Natural killer cell (primary cell): ENCODE measurements at regions of chr22 and their contacts with region 1.

Region 1: GRCh38 chr22:30356449-30357235 is at the starts of genes CCDC157 and SF3A1:
- DNase-seq: peak; percentile 89 to 95
- ATAC-seq: peak; percentile 84 to 94 (median 84)
- H3K4me3 ChIP-seq: peak within 1 kb of the TSS; percentile 96
- H3K4me3 Mint-ChIP-seq: peak within 1 kb of the TSS; percentile 97
- H3K27ac ChIP-seq: peak within 1 kb of the TSS; percentile 88
- H3K27ac Mint-ChIP-seq: peak within 1 kb of the TSS; percentile 89 to 92
- H3K4me1 ChIP-seq: peaks cover 50% of the 10 kb centered on the region
- H3K4me1 Mint-ChIP-seq: peaks cover 59% of the 10 kb centered on the region in 2 donors
- H3K27me3 ChIP-seq: no peaks in the 10 kb centered on the region
- H3K27me3 Mint-ChIP-seq: peaks cover 0 to 3% of the 10 kb centered on the region in 2 donors
- CTCF ChIP-seq: no peak
- total RNA-seq, gene CCDC157: 7.7 to 9.7 (median 8.4) TPM
- total RNA-seq, gene SF3A1: 309 to 340 (median 319) TPM

Region 2: GRCh38 chr22:30077279-30077880 is 279.3 kb before region 1 on chr22:
- intact Hi-C with region 1: no loop called
- DNase-seq: no peak
- ATAC-seq: no peak
- H3K4me3 ChIP-seq: no peak overlapping the region
- H3K4me3 Mint-ChIP-seq: no peak overlapping the region
- H3K27ac ChIP-seq: no peak overlapping the region
- H3K27ac Mint-ChIP-seq: no peak overlapping the region
- H3K4me1 ChIP-seq: peaks cover 6% of the 10 kb centered on the region
- H3K4me1 Mint-ChIP-seq: peaks cover 0 to 8% of the 10 kb centered on the region in 2 donors
- H3K27me3 ChIP-seq: no peaks in the 10 kb centered on the region
- H3K27me3 Mint-ChIP-seq: peaks cover 29 to 49% of the 10 kb centered on the region in 2 donors
- CTCF ChIP-seq: no peak

Region 3: GRCh38 chr22:30262917-30263741 is 93.5 kb before region 1 on chr22:
- intact Hi-C with region 1: loop called (anchors 1 kb)
- DNase-seq: peak; percentile 76 to 88
- ATAC-seq: no peak
- H3K4me3 ChIP-seq: no peak overlapping the region
- H3K4me3 Mint-ChIP-seq: peak overlapping the region; percentile 28
- H3K27ac ChIP-seq: no peak overlapping the region
- H3K27ac Mint-ChIP-seq: peak overlapping the region; percentile 34 to 84
- H3K4me1 ChIP-seq: peaks cover 61% of the 10 kb centered on the region
- H3K4me1 Mint-ChIP-seq: peaks cover 29 to 52% of the 10 kb centered on the region in 2 donors
- H3K27me3 ChIP-seq: no peaks in the 10 kb centered on the region
- H3K27me3 Mint-ChIP-seq: no peaks in the 10 kb centered on the region
- CTCF ChIP-seq: peak; percentile 100

Region 4: DNA sequence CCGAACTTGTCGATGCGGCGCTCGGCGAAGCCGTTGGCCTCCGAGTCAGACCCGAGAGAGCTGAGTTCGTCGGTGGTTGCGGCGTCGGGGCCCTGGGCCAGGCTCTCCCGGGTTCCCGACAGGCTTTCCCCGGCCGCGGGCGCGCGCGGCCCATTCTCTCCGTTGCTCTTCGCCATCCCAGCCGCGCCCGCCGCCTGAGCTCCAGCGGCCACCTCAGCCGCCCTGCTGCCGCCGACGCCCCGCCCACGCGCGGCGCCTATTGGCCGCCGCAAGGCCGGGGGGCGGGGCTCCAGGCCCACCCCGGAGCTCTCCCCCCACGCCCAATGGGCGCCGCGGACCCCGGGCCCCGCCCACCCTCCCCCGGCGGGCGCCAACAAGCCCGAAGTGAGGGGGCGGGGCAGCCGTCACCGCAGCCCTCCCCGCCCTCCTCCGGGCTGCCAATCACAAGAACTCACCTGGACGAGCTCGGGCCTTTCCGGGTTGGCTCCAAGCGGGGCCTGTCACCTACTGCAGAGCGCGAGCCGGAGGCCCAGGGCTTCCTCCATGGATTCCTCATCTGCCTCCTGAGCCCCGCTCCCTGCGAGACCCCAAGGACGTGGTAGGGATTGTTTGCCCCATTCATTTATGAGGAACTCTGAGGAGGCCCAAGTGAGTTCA is 29.8 kb before region 1 on chr22 and contains the start of gene TBC1D10A:
- intact Hi-C with region 1: loop called (anchors 1 kb)
- DNase-seq: peak; percentile 82 to 97
- ATAC-seq: peak; percentile 92 to 97 (median 94)
- H3K4me3 ChIP-seq: peak within 1 kb of the TSS; percentile 51
- H3K4me3 Mint-ChIP-seq: peak within 1 kb of the TSS; percentile 88
- H3K27ac ChIP-seq: peak within 1 kb of the TSS; percentile 84
- H3K27ac Mint-ChIP-seq: peak within 1 kb of the TSS; percentile 82 to 84
- H3K4me1 ChIP-seq: peaks cover 47% of the 10 kb centered on the region
- H3K4me1 Mint-ChIP-seq: peaks cover 36 to 47% of the 10 kb centered on the region in 2 donors
- H3K27me3 ChIP-seq: no peaks in the 10 kb centered on the region
- H3K27me3 Mint-ChIP-seq: no peaks in the 10 kb centered on the region
- CTCF ChIP-seq: no peak
- total RNA-seq, gene TBC1D10A: 38.9 to 48.0 (median 47.9) TPM